IMR-90 (cell line): ENCODE measurements at regions of chr7 and their contacts with region 1.

Region 1: GRCh38 chr7:95608359-95609173 is 12.2 kb upstream of the PDK4 start:
- DNase-seq: peak; percentile 93
- ATAC-seq: peak; percentile 100
- H3K4me3 ChIP-seq: no peak overlapping the region
- H3K27ac ChIP-seq: peak overlapping the region; percentile 82
- H3K4me1 ChIP-seq: peaks cover 8% of the 10 kb centered on the region
- H3K27me3 ChIP-seq: no peaks in the 10 kb centered on the region
- CTCF ChIP-seq: no peak
- POLR2A ChIP-seq: no peak
- RAD21 ChIP-seq: no peak

Region 2: GRCh38 chr7:95527776-95528250 is 80.8 kb before region 1 on chr7:
- CTCF ChIA-PET with region 1: no interaction called
- POLR2A ChIA-PET with region 1: no interaction called
- dilution Hi-C with region 1: no loop called
- in situ Hi-C with region 1: no loop called
- intact Hi-C with region 1: no loop called
- DNase-seq: no peak
- ATAC-seq: no peak
- H3K4me3 ChIP-seq: no peak overlapping the region
- H3K27ac ChIP-seq: no peak overlapping the region
- H3K4me1 ChIP-seq: no peaks in the 10 kb centered on the region
- H3K27me3 ChIP-seq: peaks cover 13% of the 10 kb centered on the region
- CTCF ChIP-seq: no peak
- POLR2A ChIP-seq: no peak
- RAD21 ChIP-seq: no peak

Region 3: GRCh38 chr7:95595746-95596197 is 12.8 kb before region 1 on chr7:
- CTCF ChIA-PET with region 1: no interaction called
- POLR2A ChIA-PET with region 1: no interaction called
- dilution Hi-C with region 1: no loop called
- in situ Hi-C with region 1: no loop called
- intact Hi-C with region 1: loop called (anchors 2 kb)
- DNase-seq: no peak
- ATAC-seq: no peak
- H3K4me3 ChIP-seq: peak overlapping the region; percentile 59
- H3K27ac ChIP-seq: peak overlapping the region; percentile 13; the same call in 1 of the 2 replicates
- H3K4me1 ChIP-seq: peaks cover 3% of the 10 kb centered on the region
- H3K27me3 ChIP-seq: no peaks in the 10 kb centered on the region
- CTCF ChIP-seq: no peak
- POLR2A ChIP-seq: no peak
- RAD21 ChIP-seq: no peak

Region 4: GRCh38 chr7:95684037-95684436 is 75.5 kb after region 1 on chr7:
- CTCF ChIA-PET with region 1: no interaction called
- POLR2A ChIA-PET with region 1: no interaction called
- dilution Hi-C with region 1: no loop called
- in situ Hi-C with region 1: no loop called
- intact Hi-C with region 1: loop called (anchors 5 kb)
- DNase-seq: peak; percentile 30
- ATAC-seq: peak; percentile 74
- H3K4me3 ChIP-seq: no peak overlapping the region
- H3K27ac ChIP-seq: no peak overlapping the region
- H3K4me1 ChIP-seq: no peaks in the 10 kb centered on the region
- H3K27me3 ChIP-seq: peaks cover 2% of the 10 kb centered on the region; the same call in 1 of the 2 replicates
- CTCF ChIP-seq: peak; percentile 64
- POLR2A ChIP-seq: no peak
- RAD21 ChIP-seq: peak; percentile 57